AG04449 (cell line): ENCODE measurements at regions of chr2 and their contacts with region 1.

Region 1: DNA sequence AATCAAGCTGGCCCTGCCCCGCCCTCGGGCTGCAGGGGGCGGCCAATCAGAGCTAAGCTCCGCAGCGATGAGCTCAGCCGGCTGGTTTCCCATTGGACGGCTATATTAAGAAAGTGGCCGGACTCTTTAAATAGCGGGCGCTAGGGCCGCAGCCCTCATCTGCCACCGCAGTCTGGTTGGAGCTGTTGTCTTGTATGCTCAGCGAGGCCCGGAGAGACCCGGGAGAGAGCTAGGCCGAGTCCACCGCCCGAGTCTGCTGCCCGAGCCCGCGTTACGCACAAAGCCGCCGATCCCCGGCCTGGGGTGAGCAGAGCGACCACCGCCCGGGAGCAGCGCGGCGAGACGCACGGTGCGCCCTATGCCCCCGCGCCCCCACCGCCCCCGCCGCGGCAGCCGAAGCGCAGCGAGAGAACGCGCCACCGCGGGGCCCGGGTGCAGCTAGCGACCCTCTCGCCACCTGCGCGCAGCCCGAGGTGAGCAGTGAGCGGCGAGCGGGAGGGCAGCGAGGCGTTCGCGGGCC is at the start of gene RHOB:
- DNase-seq: peak; percentile 90
- H3K4me3 ChIP-seq: peak within 1 kb of the TSS; percentile 89
- CTCF ChIP-seq: no peak

Region 2: GRCh38 chr2:20134616-20135415 is 312.2 kb before region 1 on chr2:
- CTCF ChIA-PET with region 1: no interaction called
- POLR2A ChIA-PET with region 1: no interaction called
- DNase-seq: no peak
- H3K4me3 ChIP-seq: no peak overlapping the region
- CTCF ChIP-seq: no peak

Region 3: DNA sequence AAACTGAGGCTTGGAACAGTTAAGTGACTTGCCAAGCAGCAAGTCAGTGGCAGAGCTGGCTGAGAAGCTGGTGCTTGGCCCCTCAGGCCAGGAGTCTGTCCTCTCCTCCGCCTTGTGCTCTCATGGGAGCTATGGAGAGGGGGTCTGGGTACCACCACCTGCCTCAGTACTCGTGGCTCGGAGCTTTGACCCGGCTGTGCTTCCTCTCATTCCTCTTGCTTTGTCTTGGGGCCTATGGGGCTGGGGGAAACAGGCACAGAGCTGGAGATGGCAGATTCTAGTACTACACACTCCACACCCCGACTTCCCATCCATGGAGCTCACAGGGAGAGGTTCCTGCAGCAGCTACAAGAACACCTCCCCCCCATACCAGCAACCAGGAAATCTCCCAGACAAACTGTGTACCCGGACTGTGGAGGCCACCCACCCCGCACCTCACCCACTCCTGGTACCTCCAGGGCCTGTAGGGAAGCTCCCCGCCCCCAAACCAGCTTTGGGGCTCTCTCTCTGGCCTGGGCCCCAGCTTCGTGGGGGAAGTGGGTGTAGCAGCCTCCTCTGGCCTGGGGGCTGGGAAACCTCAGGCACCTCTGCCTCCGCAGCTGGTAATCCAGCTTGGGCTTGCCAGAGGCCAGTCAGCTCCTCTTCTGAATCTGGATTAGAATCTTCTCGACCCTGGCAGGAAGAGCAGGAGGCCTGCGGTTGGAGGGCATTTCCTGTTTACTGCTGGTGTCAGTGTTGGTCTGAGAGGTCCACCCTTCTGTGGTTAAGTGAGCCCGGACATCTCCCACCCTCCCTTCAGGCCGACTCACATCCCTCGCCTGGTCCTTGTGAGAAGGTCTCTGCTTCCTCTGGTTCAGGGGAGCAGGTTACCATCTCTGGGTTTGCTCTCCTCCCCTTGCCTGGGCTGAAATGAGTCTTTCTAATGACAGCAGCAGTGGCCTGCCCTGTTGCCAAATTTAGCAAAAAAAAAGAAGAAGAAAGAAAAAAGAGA is 22.4 kb before region 1 on chr2:
- CTCF ChIA-PET with region 1: interaction called, 9 read pairs
- POLR2A ChIA-PET with region 1: interaction called, 113 read pairs
- DNase-seq: no peak
- H3K4me3 ChIP-seq: no peak overlapping the region
- CTCF ChIP-seq: no peak

Region 4: DNA sequence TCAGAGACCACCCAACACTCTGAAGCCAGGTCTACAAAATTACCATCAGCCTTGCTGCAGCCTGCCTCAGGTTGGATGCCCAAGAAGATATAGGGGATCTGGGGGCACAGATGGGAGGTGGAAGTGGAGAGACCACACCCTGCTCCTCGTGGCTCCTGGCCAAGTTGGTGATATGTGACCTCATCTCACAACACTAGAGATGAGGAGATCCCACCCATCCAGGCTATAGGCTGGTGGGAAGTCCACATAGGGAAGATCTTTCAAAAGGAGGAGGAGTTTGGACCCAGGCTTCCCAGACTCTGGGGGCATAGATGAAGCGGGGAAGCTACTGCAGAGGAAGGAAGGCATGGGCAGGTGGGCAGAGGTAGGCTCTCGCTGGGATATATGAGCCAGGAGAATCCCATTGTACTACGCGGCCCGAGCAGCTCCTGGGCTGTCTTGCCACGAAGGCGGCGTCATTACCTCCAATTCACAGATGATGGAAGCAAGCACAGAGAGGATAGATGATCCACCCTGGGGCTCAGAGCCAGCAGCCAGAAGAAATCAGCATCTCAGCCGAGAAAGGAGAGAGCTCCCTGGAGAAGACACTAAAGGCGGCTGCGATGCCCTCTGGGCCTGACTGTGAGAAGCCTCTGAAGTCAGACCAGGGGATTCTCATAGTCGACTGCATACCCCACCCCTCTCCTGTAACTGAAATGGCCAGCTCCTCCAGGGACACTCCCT is 95.9 kb after region 1 on chr2:
- CTCF ChIA-PET with region 1: no interaction called
- POLR2A ChIA-PET with region 1: interaction called, 17 read pairs
- DNase-seq: no peak
- H3K4me3 ChIP-seq: no peak overlapping the region
- CTCF ChIP-seq: no peak

Region 5: GRCh38 chr2:20584637-20585321 is 137.8 kb after region 1 on chr2:
- CTCF ChIA-PET with region 1: interaction called, 3 read pairs
- POLR2A ChIA-PET with region 1: interaction called, 39 read pairs
- DNase-seq: peak; percentile 91
- H3K4me3 ChIP-seq: no peak overlapping the region
- CTCF ChIP-seq: no peak

Region 6: DNA sequence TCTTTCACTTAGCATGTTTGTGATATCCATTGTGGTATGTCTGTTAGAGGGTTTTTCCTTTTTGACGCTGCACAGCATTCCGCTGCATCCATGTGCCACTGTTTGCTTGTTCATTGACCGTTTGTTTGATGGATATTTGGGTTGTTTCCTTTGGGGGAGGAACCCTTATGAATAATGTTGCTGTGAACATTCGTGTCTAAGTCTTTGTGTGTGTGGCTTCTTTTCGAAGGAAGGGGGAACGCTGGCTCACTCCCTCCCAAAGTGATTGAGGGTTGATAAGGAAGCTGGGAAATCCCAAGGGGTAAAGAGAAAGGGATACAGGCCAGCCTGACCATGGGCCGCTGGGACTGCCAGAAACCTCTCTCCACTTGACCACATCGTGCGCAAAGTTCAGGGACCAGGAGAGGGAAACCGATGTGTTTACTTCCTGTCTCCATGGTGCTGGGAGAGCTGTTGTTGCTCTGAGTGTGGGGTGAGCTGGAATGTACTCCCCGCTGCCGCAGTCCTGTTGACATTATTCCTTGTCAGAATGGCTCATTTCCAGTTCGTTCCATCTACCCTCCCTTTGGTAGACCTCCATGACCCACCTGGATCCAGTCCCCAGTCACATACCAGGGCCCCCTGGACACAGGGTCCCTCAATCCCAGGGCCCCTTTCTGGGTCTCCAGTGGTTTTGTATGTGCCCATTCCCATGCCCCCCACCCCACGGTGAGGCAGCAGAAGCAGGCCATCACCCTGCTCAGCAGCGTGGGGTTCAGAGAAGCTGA is 164.3 kb after region 1 on chr2:
- CTCF ChIA-PET with region 1: interaction called, 6 read pairs
- POLR2A ChIA-PET with region 1: interaction called, 10 read pairs
- DNase-seq: no peak
- H3K4me3 ChIP-seq: no peak overlapping the region
- CTCF ChIP-seq: no peak

Region 7: DNA sequence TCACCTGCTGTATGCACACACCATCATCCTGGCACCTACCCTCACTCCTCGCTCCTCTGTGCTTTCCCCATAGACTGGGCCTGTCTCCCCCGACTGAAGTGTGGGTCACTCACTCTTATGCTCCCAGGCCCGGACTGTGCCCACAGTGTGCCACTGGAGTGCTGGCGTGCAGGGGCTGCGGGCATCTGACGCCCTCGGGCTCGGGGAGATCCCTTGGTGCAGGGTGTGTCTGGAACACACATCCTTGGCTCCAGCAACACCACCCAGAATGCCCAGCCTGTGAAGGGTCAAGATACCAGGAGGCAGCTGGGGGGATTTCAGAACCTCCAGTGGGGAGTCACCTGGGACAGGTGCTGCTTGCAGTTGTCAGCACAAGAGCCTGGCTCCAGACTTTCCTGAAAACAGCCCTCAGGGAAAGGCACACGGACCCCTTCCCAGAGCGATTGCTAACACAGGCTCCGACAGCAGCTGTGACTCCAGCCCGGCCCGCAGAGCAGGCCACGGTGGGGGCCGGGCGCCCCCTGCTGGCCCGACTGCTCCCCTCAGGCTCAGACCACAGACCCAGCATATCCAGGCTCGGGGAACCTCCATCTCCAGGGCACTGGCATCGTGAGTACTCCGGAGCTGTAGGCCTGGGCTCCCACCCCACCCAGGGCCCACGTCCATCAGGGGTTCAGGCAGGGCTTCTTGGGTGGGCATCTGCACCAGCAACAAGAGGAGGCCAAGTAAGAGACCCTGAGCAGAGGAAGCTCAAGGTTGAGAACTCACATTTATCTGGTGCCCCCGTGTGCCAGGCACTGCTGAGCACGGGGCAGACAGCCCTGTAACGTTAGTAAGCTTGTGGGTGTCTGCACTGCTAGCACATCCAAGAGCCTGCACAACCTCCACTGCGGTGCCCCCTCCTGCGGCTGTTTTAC is 195.3 kb after region 1 on chr2:
- CTCF ChIA-PET with region 1: interaction called, 394 read pairs
- POLR2A ChIA-PET with region 1: interaction called, 46 read pairs
- DNase-seq: no peak
- H3K4me3 ChIP-seq: no peak overlapping the region
- CTCF ChIP-seq: peak; percentile 95